HepG2 (cell line): ENCODE measurements at regions of chr1 and their contacts with region 1.

Region 1: GRCh38 chr1:55277377-55278130 is 62.4 kb upstream of the USP24 start:
- DNase-seq: peak; percentile 72
- ATAC-seq: peak; percentile 96
- H3K4me3 ChIP-seq: peak overlapping the region in 1 of 3 experiments; percentile 54; a peak in 2 of 6 replicates
- H3K27ac ChIP-seq: no peak overlapping the region
- H3K4me1 ChIP-seq: peaks cover 41% of the 10 kb centered on the region
- H3K27me3 ChIP-seq: no peaks in the 10 kb centered on the region
- CTCF ChIP-seq: peak; percentile 96
- EP300 ChIP-seq: no peak
- POLR2A ChIP-seq: no peak
- RAD21 ChIP-seq: peak; percentile 82

Region 2: DNA sequence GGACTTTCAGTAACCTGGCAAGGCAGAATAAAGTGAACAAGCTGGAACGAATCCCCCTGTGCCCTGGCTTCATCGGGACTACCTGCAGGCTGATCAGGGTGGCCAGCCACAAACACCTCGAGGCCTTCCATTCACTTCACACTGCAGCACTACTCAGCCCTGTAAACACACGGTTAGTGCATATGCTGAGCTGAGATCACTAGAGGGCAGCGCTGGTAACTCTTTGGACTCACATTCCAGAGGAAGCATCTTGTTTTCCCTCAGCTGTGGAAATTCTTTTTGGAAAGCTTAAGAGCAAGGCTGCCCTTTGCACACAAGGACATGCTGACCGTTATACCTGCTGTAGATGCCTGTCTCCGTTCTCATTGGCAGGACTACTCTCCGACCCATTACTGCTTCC is 206.1 kb before region 1 on chr1:
- CTCF ChIA-PET with region 1: interaction called, 4 read pairs
- POLR2A ChIA-PET with region 1: no interaction called
- in situ Hi-C with region 1: no loop called
- intact Hi-C with region 1: loop called (anchors 10 kb)
- DNase-seq: peak; percentile 72
- ATAC-seq: peak; percentile 90
- H3K4me3 ChIP-seq: no peak overlapping the region
- H3K27ac ChIP-seq: peak overlapping the region; percentile 37
- H3K4me1 ChIP-seq: peaks cover 15% of the 10 kb centered on the region
- H3K27me3 ChIP-seq: no peaks in the 10 kb centered on the region
- CTCF ChIP-seq: peak; percentile 84
- EP300 ChIP-seq: no peak
- POLR2A ChIP-seq: no peak
- RAD21 ChIP-seq: no peak

Region 3: GRCh38 chr1:55140546-55140983 is 137.0 kb before region 1 on chr1:
- CTCF ChIA-PET with region 1: interaction called, 46 read pairs
- POLR2A ChIA-PET with region 1: no interaction called
- in situ Hi-C with region 1: loop called (anchors 5 kb)
- intact Hi-C with region 1: loop called (anchors 1 kb)
- DNase-seq: peak; percentile 65
- ATAC-seq: peak; percentile 85
- H3K4me3 ChIP-seq: no peak overlapping the region
- H3K27ac ChIP-seq: no peak overlapping the region
- H3K4me1 ChIP-seq: no peaks in the 10 kb centered on the region
- H3K27me3 ChIP-seq: no peaks in the 10 kb centered on the region
- CTCF ChIP-seq: peak; percentile 79
- EP300 ChIP-seq: no peak
- POLR2A ChIP-seq: no peak
- RAD21 ChIP-seq: peak; percentile 49

Region 4: DNA sequence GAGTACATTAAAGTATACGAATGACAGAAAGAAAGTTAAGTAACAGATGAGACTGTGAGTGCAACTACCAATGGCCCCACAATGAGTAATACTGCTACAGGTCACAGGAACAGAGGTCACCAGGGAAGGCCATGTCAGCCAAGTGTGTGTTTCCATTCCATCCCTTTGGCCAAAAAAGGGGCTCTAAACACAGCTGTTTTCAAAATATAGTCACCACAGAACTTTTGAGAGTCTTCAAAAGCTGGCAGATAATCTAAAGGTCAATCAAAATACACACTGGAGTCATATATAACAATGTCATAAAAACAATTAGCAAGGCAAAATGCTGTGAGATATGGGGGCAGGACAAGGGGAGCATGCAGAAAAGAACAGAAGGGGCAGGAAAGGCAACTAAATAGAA is 72.6 kb before region 1 on chr1:
- CTCF ChIA-PET with region 1: no interaction called
- POLR2A ChIA-PET with region 1: no interaction called
- in situ Hi-C with region 1: no loop called
- intact Hi-C with region 1: no loop called
- DNase-seq: peak; percentile 15
- ATAC-seq: peak; percentile 76
- H3K4me3 ChIP-seq: no peak overlapping the region
- H3K27ac ChIP-seq: peak overlapping the region; percentile 36
- H3K4me1 ChIP-seq: peaks cover 38% of the 10 kb centered on the region
- H3K27me3 ChIP-seq: no peaks in the 10 kb centered on the region
- CTCF ChIP-seq: no peak
- EP300 ChIP-seq: 0 out of 4 replicates have a peak, but pooled peaks of 1 of the 2 experiments have one; percentile 18
- POLR2A ChIP-seq: no peak
- RAD21 ChIP-seq: no peak

Region 5: GRCh38 chr1:55215256-55216021 is 62.1 kb before region 1 on chr1 and contains the start of gene USP24:
- CTCF ChIA-PET with region 1: no interaction called
- POLR2A ChIA-PET with region 1: no interaction called
- in situ Hi-C with region 1: no loop called
- intact Hi-C with region 1: loop called (anchors 2 kb)
- DNase-seq: peak; percentile 63
- ATAC-seq: peak; percentile 91
- H3K4me3 ChIP-seq: peak within 1 kb of the TSS; percentile 87 to 98 (median 94)
- H3K27ac ChIP-seq: peak within 1 kb of the TSS; percentile 90
- H3K4me1 ChIP-seq: peaks cover 49% of the 10 kb centered on the region
- H3K27me3 ChIP-seq: no peaks in the 10 kb centered on the region; a peak in 1 of 5 replicates
- CTCF ChIP-seq: no peak
- EP300 ChIP-seq: no peak
- POLR2A ChIP-seq: peak; percentile 67 to 81
- RAD21 ChIP-seq: no peak; the same call in 1 of the 2 replicates
- total RNA-seq, gene USP24: 47.6 and 59.5 TPM in 2 replicates